Left cardiac atrium (tissue), 4 donors: ENCODE measurements at regions of chr1 and their contacts with region 1.

Region 1: DNA sequence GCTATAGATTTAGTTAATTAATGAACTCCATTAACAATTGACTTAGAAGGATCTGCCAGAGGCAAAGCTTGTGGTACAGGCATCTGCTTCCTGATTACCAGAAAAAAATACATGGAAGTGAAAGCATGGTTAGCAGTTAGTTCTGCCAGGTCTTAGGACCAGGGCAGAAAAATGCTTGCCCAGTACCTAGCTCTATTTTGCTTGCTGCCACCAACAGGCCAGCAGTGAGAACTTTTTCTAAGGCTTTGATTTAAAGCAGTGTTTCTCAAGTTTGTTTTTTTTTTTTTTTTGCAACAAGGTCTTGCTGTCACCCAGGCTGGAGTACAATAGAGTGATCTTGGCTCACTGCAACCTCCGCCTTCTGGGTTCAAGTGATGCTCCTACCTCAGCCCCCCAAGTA is 16.4 kb upstream of the MTF1 start:
- DNase-seq: no peak
- ATAC-seq: no peak

Region 2: GRCh38 chr1:37890378-37891014 is 14.7 kb after region 1 on chr1:
- intact Hi-C with region 1: no loop called
- DNase-seq: no peak
- ATAC-seq: peak in 1 of 2 donors; percentile 29

Region 3: DNA sequence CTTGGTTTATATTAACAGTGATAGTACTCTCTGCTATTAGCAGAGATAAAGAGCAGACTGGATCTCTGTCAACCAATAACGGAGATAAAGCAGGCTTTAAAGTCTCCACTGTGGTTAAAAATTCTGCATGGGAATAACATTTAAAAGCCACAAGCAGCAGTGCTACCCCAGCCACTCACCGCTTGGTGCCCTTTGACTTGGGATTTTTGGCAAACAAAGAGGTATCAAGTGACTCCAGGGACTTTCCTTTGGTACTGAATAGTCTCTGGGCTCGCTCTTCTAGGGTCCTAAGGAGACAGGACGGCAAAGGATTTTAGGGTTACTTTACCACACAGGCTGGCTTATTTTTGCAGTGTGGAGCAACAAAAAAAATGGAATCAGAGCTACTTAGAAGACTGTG is 102.7 kb after region 1 on chr1:
- intact Hi-C with region 1: loop called in 1 of 2 experiments (anchors 5 kb)
- DNase-seq: no peak
- ATAC-seq: no peak